Activated CD4-positive, alpha-beta memory T cell treated with anti-CD3 and anti-CD28 coated beads, Interleukin-2, amount 10 ng/mL, durations not matched to agents 7 days and 5 days (primary cell): ENCODE measurements at regions of chr6 and their contacts with region 1.

Region 1: DNA sequence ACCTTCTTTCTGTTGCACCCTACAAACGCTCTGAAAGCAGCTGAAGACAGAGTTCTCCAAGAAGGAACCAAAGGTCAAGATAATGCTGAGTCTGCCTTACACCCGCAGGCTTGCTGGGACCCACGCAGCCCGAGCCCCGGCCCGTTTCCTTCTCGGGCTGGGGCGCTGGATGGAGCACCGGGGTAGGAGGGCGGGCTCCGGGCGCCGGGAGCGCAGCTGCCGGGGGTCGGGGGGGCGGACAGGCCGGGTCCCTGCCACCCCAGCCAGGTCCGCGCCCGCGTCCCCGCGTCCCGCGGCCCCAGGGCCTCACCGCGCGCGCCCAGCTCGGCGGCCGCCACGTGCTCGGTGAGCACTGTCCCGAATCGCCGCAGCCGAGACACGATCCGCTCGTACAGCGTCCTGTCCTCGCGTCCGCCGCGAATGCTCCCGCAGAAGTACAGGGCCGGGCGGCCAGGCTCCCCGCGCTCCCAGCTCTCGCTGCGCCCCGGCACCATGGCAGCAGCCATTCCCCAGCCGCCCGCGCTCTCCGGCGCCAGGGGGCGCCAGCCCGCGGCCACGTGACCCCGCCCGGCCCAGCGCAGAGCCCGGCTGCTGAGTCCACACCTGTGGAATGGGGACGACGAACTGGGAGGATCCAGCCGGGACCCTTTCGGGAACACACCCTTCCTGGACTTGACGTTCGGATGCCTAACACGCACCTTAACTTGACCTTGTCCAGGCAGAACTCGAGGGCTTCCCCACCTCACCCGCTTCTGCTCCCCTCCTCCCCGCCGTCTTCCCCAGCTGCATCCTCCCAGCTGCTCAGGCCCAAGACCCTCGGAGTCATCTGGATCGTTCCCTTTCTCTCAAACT is at the start of gene DNPH1:
- DNase-seq: peak; percentile 83
- H3K4me3 Mint-ChIP-seq: peak within 1 kb of the TSS; percentile 84
- H3K27ac Mint-ChIP-seq: peak within 1 kb of the TSS; percentile 83
- H3K4me1 Mint-ChIP-seq: peaks cover 43% of the 10 kb centered on the region
- H3K27me3 Mint-ChIP-seq: peaks cover 9% of the 10 kb centered on the region
- total RNA-seq, gene DNPH1: 39.6 to 42.5 TPM

Region 2: DNA sequence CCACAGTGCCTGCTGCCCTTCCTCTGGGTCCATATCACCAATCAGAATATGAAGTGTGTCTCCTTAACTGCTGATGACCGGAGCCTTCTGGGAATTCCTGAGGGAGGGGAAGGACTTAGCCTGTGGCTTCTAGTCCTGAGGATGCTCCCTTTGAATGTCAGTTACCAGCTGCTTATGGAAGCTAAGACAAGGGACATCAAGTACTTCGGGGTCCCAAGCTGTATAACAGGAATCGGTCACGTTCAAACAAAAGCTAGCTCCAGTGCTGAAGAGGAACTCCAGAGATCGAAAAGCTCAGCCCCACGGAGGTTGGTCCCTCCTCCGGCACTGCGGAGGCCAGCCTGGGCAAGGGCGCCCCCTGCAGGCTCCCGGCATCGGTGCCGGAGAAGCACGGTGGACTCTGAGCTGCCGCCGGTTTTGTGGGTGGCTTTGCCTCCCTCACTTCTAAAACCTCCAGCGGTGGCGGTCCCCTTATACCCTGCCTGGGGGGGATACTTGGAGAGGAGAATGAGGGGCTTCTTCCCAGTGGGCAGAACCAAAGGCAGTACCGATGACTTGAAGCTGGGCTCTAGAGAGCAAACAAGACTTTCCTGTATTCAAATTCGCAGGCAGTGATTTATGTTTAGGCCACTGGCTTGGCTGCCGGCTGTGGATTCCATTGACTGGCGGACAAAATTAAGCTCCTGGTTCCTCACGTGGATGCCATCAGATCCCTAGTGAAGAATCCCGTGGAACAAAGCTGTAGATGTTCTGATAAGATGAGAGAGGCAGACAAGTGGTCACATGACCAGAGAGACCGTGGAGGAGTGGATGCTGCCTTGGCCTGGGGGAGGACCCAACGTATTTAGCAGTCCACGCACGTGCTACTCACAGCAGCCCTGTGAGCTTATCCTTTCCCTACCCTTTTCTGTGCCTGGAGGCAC is 681.5 kb before region 1 on chr6:
- CTCF ChIA-PET with region 1: no interaction called
- POLR2A ChIA-PET with region 1: no interaction called
- DNase-seq: peak; percentile 88
- H3K4me3 Mint-ChIP-seq: peak overlapping the region; percentile 54
- H3K27ac Mint-ChIP-seq: peak overlapping the region; percentile 33
- H3K4me1 Mint-ChIP-seq: peaks cover 20% of the 10 kb centered on the region
- H3K27me3 Mint-ChIP-seq: peaks cover 4% of the 10 kb centered on the region

Region 3: GRCh38 chr6:43181942-43182860 is 47.0 kb before region 1 on chr6 and contains the start of gene CUL9:
- CTCF ChIA-PET with region 1: interaction called, 5 read pairs
- POLR2A ChIA-PET with region 1: interaction called, 12 read pairs
- DNase-seq: peak; percentile 87
- H3K4me3 Mint-ChIP-seq: peak within 1 kb of the TSS; percentile 95
- H3K27ac Mint-ChIP-seq: peak within 1 kb of the TSS; percentile 53
- H3K4me1 Mint-ChIP-seq: peaks cover 46% of the 10 kb centered on the region
- H3K27me3 Mint-ChIP-seq: no peaks in the 10 kb centered on the region
- total RNA-seq, gene CUL9: 45.0 to 45.9 TPM

Region 4: GRCh38 chr6:43308101-43308989 is 79.2 kb after region 1 on chr6 and contains the start of gene CRIP3:
- CTCF ChIA-PET with region 1: interaction called, 10 read pairs
- POLR2A ChIA-PET with region 1: no interaction called
- DNase-seq: peak; percentile 59
- H3K4me3 Mint-ChIP-seq: peak within 1 kb of the TSS; percentile 72
- H3K27ac Mint-ChIP-seq: no peak within 1 kb of the TSS
- H3K4me1 Mint-ChIP-seq: peaks cover 12% of the 10 kb centered on the region
- H3K27me3 Mint-ChIP-seq: peaks cover 14% of the 10 kb centered on the region
- total RNA-seq, gene CRIP3: 0.88 TPM in 1 of 2 experiments, not detected in the other

Region 5: DNA sequence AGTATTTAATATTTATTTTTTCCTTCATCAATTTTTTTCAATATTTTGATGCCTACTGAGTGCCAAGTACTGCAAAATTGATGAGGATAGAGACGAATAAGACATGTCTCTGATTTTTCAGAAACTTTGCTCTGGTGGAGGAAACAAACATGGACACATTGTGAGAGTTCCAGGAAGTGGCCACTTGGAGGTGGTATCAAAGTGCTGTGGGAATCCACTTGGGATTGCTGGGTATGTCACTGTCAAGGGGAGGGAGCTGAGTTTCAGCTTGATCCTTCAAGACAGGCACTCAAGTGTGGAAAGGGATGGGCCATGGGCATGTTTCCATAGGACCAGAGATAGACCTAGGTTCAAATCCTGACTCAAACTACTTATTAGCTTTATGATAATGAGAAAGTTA is 173.6 kb after region 1 on chr6:
- CTCF ChIA-PET with region 1: interaction called, 24 read pairs
- POLR2A ChIA-PET with region 1: no interaction called
- DNase-seq: no peak
- H3K4me3 Mint-ChIP-seq: no peak overlapping the region
- H3K27ac Mint-ChIP-seq: no peak overlapping the region
- H3K4me1 Mint-ChIP-seq: peaks cover under 1% of the 10 kb centered on the region
- H3K27me3 Mint-ChIP-seq: peaks cover 20% of the 10 kb centered on the region